Motor neuron (in vitro differentiated cells): ENCODE measurements at regions of chr18 and their contacts with region 1.

Region 1: DNA sequence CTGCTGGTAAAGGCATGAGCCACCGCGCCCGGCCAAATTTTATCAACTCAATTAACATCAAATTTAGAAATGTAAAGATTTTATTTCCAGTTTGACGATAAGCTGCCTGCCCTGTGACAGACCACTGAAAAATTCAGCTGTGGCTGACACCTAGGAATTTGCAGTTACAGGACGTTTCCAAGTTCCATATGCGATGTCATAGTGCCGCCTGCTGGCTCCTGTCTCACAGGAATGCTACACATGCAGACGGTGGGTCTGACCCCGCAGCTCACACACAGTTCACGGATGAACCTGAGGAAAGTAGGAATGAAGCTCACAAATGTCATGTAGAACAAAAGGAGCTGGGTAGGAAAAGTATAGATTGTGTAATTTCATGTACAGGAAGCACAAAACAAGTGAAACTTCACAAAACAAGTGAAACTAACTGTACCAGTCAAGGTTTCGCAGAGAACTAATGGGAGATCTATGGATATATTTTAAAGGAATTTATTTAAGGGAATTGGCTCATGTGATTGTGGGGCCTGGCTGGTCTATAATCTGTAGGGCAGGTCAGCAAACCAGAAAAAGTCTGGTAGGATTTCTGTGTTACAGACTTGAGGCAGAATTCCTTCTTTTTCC is 13.2 kb upstream of the SEH1L start:
- ATAC-seq: peak; percentile 89 to 99 (median 93)
- H3K4me3 ChIP-seq: no peak overlapping the region
- H3K27ac ChIP-seq: no peak overlapping the region
- H3K4me1 ChIP-seq: peaks cover 0 to 4% of the 10 kb centered on the region in 2 donors

Region 2: DNA sequence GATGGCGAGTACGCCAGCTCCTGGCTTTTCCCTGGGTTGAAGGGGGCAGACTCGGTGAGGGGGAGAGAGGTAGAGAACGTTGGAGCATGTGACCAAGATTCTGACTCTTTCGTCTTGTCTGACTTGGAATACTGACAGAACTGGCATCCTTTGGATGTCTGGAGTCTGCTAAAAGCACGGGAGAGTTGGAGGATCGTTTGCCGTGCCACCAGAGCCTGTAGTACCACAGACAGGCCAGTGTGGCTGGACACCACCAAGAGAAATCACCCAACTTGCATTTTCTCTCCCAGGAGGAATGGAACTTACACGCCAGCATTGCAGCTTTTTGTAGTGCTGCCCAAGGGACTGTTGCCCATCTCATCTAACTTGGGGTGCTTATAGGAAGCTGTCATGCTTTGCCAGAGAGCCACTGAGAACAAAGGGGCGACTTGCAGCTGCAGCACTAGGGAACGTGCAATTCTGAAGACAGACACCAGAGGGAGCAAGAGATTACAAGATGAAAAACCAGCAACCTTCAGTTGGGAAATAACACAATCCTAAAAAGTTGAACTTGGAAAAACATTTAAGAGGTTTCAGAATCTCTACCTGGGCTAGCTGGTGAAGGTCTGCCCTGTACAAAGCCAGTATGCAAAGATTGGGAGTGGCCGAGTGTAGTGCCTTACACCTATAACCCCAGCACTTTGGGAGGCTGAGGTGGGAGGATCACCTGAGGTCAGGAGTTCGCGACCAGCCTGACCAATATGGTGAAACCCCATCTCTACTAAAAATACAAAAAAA is 207.6 kb before region 1 on chr18:
- in situ Hi-C with region 1: loop called in 8 of 9 experiments (anchors 5 to 25 kb)
- ATAC-seq: peak; percentile 25 to 80 (median 64)
- H3K4me3 ChIP-seq: no peak overlapping the region
- H3K27ac ChIP-seq: no peak overlapping the region
- H3K4me1 ChIP-seq: no peaks in the 10 kb centered on the region